ENCODE measurements at regions of chr4 and their contacts with region 1.

Region 1: GRCh38 chr4:16225863-16226815 is at the start of gene TAPT1:
- DNase-seq: peak; percentile 49 to 89 (median 63)
- ATAC-seq: peak; percentile 84
- H3K4me3 ChIP-seq: peak within 1 kb of the TSS; percentile 74
- H3K4me3 Mint-ChIP-seq: peak within 1 kb of the TSS; percentile 85 to 96 (median 92)
- H3K27ac ChIP-seq: peak within 1 kb of the TSS; percentile 84
- H3K27ac Mint-ChIP-seq: peak within 1 kb of the TSS; percentile 90 to 98 (median 96)
- H3K4me1 ChIP-seq: peaks cover 30 to 35% of the 10 kb centered on the region in 2 donors
- H3K4me1 Mint-ChIP-seq: peaks cover 40 to 67% (median 58%) of the 10 kb centered on the region in 7 donors
- H3K27me3 ChIP-seq: no peaks in the 10 kb centered on the region
- H3K27me3 Mint-ChIP-seq: peaks cover 0 to 2% (median 0%) of the 10 kb centered on the region in 5 donors
- total RNA-seq, gene TAPT1: 43.0 to 82.5 (median 70.6) TPM

Region 2: DNA sequence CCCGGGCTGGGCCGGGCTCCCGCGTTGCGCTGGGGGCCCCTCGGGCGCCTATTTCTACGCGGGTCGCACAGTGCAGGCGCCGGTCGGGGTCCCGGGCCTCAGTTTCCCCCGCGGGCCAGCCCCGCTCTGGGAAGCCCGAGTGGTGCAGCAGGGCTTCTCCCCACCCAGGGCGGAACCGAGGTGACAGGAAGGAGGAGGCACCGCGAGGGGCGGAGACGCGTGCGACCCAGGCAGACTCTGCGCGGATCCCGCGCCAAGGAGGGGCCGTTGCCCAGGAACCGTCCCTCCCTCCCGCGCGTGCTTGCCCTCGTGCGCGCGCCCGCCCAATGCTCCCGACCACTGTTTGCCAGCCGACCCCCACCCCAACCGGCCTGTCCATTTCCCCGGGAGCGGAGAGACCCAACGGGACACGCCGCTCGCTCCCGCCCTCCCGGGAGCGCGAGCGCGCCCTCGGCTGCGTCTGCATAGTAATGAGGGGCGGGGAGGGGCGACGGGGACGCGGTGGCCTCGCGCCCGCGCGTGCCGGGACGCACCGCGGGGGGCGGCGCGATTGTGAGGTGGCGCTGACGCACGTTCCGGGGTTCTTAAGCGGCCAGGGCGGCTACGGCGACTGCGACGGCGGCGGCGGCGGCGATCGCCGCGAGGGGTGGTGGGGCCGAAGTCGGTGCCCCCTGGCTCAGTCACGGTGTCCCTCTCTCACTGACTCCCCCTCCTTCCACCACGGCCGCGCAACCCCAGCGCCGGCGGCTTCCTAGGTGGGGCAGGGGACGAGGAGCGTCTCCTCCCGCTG is 1224.1 kb before region 1 on chr4 and contains the start of gene CPEB2:
- CTCF ChIA-PET with region 1: no interaction called
- POLR2A ChIA-PET with region 1: interaction called, 3 read pairs
- intact Hi-C with region 1: loop called (anchors 1 to 5 kb)
- DNase-seq: peak; percentile 88 to 95 (median 93)
- ATAC-seq: peak; percentile 81
- H3K4me3 ChIP-seq: peak within 1 kb of the TSS; percentile 99
- H3K4me3 Mint-ChIP-seq: peak within 1 kb of the TSS; percentile 86 to 95 (median 93)
- H3K27ac ChIP-seq: peak within 1 kb of the TSS; percentile 100
- H3K27ac Mint-ChIP-seq: peak within 1 kb of the TSS; percentile 90 to 98 (median 97)
- H3K4me1 ChIP-seq: peaks cover 7 to 10% of the 10 kb centered on the region in 2 donors
- H3K4me1 Mint-ChIP-seq: peaks cover 17 to 29% (median 24%) of the 10 kb centered on the region in 7 donors
- H3K27me3 ChIP-seq: no peaks in the 10 kb centered on the region
- H3K27me3 Mint-ChIP-seq: no peaks in the 10 kb centered on the region
- total RNA-seq, gene CPEB2: 11.1 to 21.7 (median 14.9) TPM

Region 3: DNA sequence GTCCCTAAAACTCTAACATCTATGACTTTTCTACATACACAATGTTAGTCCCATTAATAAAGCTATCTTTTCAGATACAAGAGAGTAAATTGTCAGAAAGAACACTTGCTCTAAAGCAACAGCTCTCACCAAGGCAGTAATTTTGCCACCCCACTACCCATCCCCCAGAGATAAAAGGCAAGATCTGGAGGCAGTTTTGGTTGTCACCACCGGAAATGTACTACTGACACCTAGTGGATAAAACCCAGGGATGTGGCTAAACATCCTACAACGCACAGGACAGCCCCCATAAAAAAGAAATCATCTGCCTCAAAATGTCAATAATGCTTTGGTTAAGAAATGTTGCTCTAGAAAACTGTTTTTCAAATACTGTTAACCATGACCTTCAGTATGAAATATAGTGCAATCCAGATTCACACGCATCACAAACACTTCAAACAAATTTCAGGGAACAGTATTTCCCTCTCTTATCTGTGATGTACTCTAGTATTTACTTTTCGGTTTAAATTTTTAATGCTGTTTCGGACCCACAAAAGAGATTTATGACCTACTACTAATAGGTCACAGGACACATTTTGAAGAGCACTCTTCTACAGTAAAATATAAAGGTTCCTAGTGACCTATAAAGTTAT is 576.1 kb before region 1 on chr4:
- CTCF ChIA-PET with region 1: no interaction called
- POLR2A ChIA-PET with region 1: interaction called, 6 read pairs
- intact Hi-C with region 1: loop called (anchors 1 to 5 kb)
- DNase-seq: peak; percentile 11 to 83 (median 79)
- ATAC-seq: peak; percentile 92
- H3K4me3 ChIP-seq: no peak overlapping the region
- H3K4me3 Mint-ChIP-seq: peak overlapping the region; percentile 53 to 74 (median 68)
- H3K27ac ChIP-seq: no peak overlapping the region
- H3K27ac Mint-ChIP-seq: peak overlapping the region in 8 of 9 donors; percentile 9 to 71 (median 54)
- H3K4me1 ChIP-seq: peaks cover 36 to 46% of the 10 kb centered on the region in 2 donors
- H3K4me1 Mint-ChIP-seq: peaks cover 39 to 85% (median 77%) of the 10 kb centered on the region in 7 donors
- H3K27me3 ChIP-seq: no peaks in the 10 kb centered on the region
- H3K27me3 Mint-ChIP-seq: no peaks in the 10 kb centered on the region

Region 4: GRCh38 chr4:15756361-15756861 is 469.7 kb before region 1 on chr4:
- CTCF ChIA-PET with region 1: no interaction called
- POLR2A ChIA-PET with region 1: interaction called, 3 read pairs
- intact Hi-C with region 1: loop called in 1 of 2 experiments (anchors 2 kb)
- DNase-seq: peak; percentile 33 to 83 (median 78)
- ATAC-seq: peak; percentile 89
- H3K4me3 ChIP-seq: peak overlapping the region; percentile 41
- H3K4me3 Mint-ChIP-seq: peak overlapping the region; percentile 64 to 92 (median 76)
- H3K27ac ChIP-seq: peak overlapping the region; percentile 39
- H3K27ac Mint-ChIP-seq: peak overlapping the region; percentile 81 to 98 (median 93)
- H3K4me1 ChIP-seq: peaks cover 35 to 36% of the 10 kb centered on the region in 2 donors
- H3K4me1 Mint-ChIP-seq: peaks cover 43 to 69% (median 62%) of the 10 kb centered on the region in 7 donors
- H3K27me3 ChIP-seq: no peaks in the 10 kb centered on the region
- H3K27me3 Mint-ChIP-seq: no peaks in the 10 kb centered on the region

Region 5: DNA sequence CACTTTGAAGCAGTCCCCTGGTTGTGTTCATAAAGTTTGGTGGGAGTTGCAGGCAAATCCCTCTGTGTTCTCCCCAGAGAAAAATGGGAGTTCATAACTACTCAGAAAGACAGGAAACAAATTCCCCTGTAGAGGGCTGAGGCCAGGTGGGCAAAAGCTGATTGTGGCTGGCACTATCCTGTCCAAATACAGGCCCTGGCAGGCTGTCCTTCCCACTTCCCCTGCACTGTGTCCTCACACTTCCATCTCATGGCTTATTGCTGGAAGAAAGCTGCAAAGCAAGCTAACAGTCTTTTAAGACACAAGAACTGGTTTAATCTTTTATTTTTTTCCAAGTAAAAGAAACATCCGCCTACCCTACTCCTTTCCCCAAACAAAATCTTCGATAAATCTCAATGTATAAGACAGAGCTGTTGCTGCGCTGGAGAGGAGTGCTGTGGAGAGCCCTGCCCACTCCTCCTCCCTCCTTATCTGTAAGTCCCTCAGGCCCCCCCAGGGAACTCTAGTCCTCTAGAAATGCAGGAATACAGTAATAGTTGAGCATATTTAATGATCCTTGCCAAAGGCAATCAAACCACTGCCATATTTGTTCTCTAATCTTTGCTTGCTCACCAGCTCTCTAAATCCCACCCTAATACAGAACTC is 13.9 kb before region 1 on chr4:
- CTCF ChIA-PET with region 1: interaction called, 5 read pairs
- POLR2A ChIA-PET with region 1: interaction called, 14 read pairs
- intact Hi-C with region 1: loop called (anchors 1 kb)
- DNase-seq: no peak
- ATAC-seq: no peak
- H3K4me3 ChIP-seq: no peak overlapping the region
- H3K4me3 Mint-ChIP-seq: peak overlapping the region in 3 of 10 donors; percentile 6 to 48 (median 32)
- H3K27ac ChIP-seq: no peak overlapping the region
- H3K27ac Mint-ChIP-seq: peak overlapping the region in 5 of 9 donors; percentile 4 to 63 (median 47)
- H3K4me1 ChIP-seq: peaks cover 13 to 18% of the 10 kb centered on the region in 2 donors
- H3K4me1 Mint-ChIP-seq: peaks cover 45 to 89% (median 74%) of the 10 kb centered on the region in 7 donors
- H3K27me3 ChIP-seq: no peaks in the 10 kb centered on the region
- H3K27me3 Mint-ChIP-seq: no peaks in the 10 kb centered on the region

Region 6: GRCh38 chr4:16952462-16952871 is 726.3 kb after region 1 on chr4:
- CTCF ChIA-PET with region 1: no interaction called
- POLR2A ChIA-PET with region 1: no interaction called
- intact Hi-C with region 1: no loop called
- DNase-seq: no peak
- ATAC-seq: no peak
- H3K4me3 ChIP-seq: no peak overlapping the region
- H3K4me3 Mint-ChIP-seq: no peak overlapping the region
- H3K27ac ChIP-seq: no peak overlapping the region
- H3K27ac Mint-ChIP-seq: no peak overlapping the region
- H3K4me1 ChIP-seq: no peaks in the 10 kb centered on the region
- H3K4me1 Mint-ChIP-seq: peaks cover 0 to 8% (median 0%) of the 10 kb centered on the region in 7 donors
- H3K27me3 ChIP-seq: no peaks in the 10 kb centered on the region
- H3K27me3 Mint-ChIP-seq: peaks cover 7 to 37% (median 10%) of the 10 kb centered on the region in 5 donors

Region 7: DNA sequence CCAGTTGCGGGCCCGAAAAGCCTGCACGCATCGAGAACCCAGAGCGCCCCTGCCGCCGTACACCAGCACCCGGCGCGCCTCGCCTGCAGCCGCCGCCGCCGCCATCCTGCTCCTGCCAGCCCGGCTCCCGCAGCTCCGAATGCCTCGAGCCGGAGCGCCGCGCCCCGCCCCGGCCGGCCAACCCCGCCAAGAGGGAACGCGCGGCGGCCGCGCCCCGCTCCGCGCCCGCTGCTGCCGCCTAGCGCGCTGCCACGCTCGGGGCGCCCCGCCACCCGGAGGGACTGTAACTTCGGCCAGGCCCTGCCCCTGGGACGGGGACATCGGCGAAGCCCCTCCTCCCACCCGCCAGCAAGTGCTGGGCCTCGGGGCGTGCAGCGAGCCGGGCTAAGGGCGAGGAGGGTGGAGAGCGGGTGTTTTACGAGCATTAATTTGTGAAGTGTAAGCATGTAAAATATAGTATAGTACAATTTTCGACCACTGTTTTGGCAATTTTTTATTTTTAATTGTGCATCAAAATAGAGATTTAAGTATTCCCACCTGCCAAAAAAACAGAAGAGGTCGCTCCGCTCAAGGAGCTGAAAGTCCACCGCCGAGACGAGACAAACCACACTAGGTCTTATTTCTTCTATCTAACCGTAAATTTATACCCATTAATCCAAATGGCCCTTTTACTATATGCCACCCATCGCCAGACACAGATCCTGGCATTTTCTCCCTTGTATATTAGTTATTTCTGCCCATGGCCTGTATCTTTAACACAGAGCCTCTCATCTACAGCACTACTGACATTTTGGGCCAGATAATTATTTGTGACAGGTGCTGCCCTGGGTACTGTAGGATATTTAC is 1286.0 kb after region 1 on chr4 and contains the start of gene QDPR:
- CTCF ChIA-PET with region 1: no interaction called
- POLR2A ChIA-PET with region 1: no interaction called
- intact Hi-C with region 1: loop called in 1 of 2 experiments (anchors 5 kb)
- DNase-seq: peak; percentile 55 to 81 (median 70)
- ATAC-seq: peak; percentile 95
- H3K4me3 ChIP-seq: peak within 1 kb of the TSS; percentile 94
- H3K4me3 Mint-ChIP-seq: peak within 1 kb of the TSS; percentile 86 to 100 (median 96)
- H3K27ac ChIP-seq: peak within 1 kb of the TSS; percentile 69
- H3K27ac Mint-ChIP-seq: peak within 1 kb of the TSS; percentile 83 to 96 (median 85)
- H3K4me1 ChIP-seq: peaks cover 9 to 10% of the 10 kb centered on the region in 2 donors
- H3K4me1 Mint-ChIP-seq: peaks cover 18 to 42% (median 34%) of the 10 kb centered on the region in 7 donors
- H3K27me3 ChIP-seq: no peaks in the 10 kb centered on the region
- H3K27me3 Mint-ChIP-seq: peaks cover 0 to 18% (median 6%) of the 10 kb centered on the region in 5 donors
- total RNA-seq, gene QDPR: 11.8 to 27.7 (median 23.1) TPM

Region 8: DNA sequence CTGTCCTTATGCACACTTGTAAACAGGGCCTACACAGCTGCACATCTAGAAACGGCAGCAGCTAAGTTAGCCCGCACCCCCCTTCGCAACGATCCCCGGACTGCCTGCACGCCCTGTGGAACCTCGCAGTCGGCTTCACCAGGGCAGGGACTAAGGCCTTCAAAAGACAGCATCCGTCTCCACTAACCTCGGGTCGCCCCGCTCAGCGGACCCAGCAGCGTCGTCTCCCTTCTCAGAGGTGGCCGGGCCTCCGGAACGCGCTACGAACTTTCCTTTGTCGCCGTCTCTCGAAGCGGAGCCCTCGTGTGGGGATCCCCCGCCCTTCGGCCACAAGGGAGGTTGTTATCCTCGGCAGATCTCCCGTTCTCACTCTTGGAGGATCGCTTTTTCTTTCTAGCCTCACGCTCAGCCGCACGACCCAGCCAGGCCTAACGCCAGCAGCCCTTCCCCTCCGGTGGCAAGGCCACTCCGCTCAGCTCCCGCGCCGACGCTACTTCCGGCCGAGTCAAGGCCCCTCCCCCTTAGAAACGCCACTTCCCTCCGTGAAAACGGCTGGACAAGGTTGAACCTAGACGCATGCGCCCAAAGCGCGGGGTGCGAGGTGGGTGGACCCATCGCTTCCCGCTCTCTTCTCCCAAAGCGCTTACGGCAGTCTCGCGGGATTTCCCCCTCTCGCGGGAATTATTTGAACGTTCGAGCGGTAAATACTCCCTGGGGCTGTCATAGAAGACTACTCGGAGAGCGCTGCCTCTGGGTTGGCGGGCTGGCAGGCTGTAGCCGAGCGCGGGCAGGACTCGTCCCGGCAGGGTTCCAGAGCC is 1584.3 kb after region 1 on chr4 and contains the starts of genes DCAF16 and NCAPG:
- CTCF ChIA-PET with region 1: no interaction called
- POLR2A ChIA-PET with region 1: no interaction called
- intact Hi-C with region 1: loop called (anchors 1 to 2 kb)
- DNase-seq: peak; percentile 97 to 99 (median 97)
- ATAC-seq: peak; percentile 95
- H3K4me3 ChIP-seq: peak within 1 kb of the TSS; percentile 96
- H3K4me3 Mint-ChIP-seq: peak within 1 kb of the TSS; percentile 93 to 100 (median 98)
- H3K27ac ChIP-seq: peak within 1 kb of the TSS; percentile 99
- H3K27ac Mint-ChIP-seq: peak within 1 kb of the TSS; percentile 91 to 99 (median 98)
- H3K4me1 ChIP-seq: peaks cover 16 to 30% of the 10 kb centered on the region in 2 donors
- H3K4me1 Mint-ChIP-seq: peaks cover 50 to 65% (median 59%) of the 10 kb centered on the region in 7 donors
- H3K27me3 ChIP-seq: no peaks in the 10 kb centered on the region
- H3K27me3 Mint-ChIP-seq: no peaks in the 10 kb centered on the region
- total RNA-seq, gene DCAF16: 50.3 to 85.1 (median 73.8) TPM
- total RNA-seq, gene NCAPG: 0.24 to 44.1 (median 0.35) TPM